KBM-7 (cell line): ENCODE measurements at regions of chr9 and their contacts with region 1.

Region 1: GRCh38 chr9:114906908-114907571 is 23.4 kb downstream of the TNFSF8 start:
- DNase-seq: peak; percentile 44

Region 2: GRCh38 chr9:114405294-114406034 is 501.6 kb before region 1 on chr9:
- in situ Hi-C with region 1: loop called (anchors 25 kb)
- DNase-seq: peak; percentile 91

Region 3: GRCh38 chr9:114777821-114778609 is 129.0 kb before region 1 on chr9:
- in situ Hi-C with region 1: no loop called
- DNase-seq: no peak